Head of caudate nucleus (tissue), 42 donors: ENCODE measurements at regions of chr4 and their contacts with region 1.

Region 1: DNA sequence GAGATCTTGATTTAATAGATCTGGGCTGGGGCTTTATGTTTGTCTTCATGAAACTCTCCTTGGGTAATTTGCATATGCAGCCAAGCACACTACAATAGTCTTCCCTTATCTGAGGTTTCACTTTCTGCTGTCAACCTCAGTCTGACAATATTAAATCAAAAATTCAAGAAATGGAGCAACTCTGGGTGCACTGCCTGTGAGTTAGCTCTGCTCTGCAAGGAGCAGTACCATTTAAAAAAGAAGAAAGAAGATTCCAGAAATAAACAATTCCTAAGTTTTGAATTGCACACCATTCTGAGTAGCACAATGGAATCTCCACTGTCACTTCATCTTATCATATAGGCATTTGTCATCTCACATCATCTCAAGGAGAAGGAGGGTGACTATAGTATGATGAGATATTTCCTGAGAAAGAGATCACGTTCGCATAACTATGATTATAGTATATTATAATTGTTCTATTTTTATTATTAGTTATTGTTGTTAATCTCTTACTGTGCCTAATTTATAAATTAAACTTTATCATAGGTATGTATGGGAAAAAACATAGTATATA is 9.4 kb downstream of the FNIP2 start:
- DNase-seq: no peak

Region 2: GRCh38 chr4:158553366-158553765 is 224.9 kb before region 1 on chr4:
- intact Hi-C with region 1: no loop called
- DNase-seq: no peak

Region 3: GRCh38 chr4:158821228-158821971 is 43.2 kb after region 1 on chr4:
- intact Hi-C with region 1: loop called (anchors 10 kb)
- DNase-seq: no peak